ENCODE measurements at regions of chr21 and their contacts with region 1.

Region 1: GRCh38 chr21:42117229-42117966 is 46.3 kb downstream of the UMODL1 start:
- DNase-seq: peak in 1 of 2 donors; percentile 46
- ATAC-seq: peak; percentile 66 to 87
- H3K4me3 ChIP-seq: no peak overlapping the region
- H3K27ac ChIP-seq: no peak overlapping the region
- H3K4me1 ChIP-seq: peaks cover 0 to 3% of the 10 kb centered on the region in 2 donors
- H3K27me3 ChIP-seq: peaks cover 0 to 11% (median 7%) of the 10 kb centered on the region in 3 donors
- CTCF ChIP-seq: peak; percentile 80 to 91 (median 87)
- POLR2A ChIP-seq: no peak

Region 2: DNA sequence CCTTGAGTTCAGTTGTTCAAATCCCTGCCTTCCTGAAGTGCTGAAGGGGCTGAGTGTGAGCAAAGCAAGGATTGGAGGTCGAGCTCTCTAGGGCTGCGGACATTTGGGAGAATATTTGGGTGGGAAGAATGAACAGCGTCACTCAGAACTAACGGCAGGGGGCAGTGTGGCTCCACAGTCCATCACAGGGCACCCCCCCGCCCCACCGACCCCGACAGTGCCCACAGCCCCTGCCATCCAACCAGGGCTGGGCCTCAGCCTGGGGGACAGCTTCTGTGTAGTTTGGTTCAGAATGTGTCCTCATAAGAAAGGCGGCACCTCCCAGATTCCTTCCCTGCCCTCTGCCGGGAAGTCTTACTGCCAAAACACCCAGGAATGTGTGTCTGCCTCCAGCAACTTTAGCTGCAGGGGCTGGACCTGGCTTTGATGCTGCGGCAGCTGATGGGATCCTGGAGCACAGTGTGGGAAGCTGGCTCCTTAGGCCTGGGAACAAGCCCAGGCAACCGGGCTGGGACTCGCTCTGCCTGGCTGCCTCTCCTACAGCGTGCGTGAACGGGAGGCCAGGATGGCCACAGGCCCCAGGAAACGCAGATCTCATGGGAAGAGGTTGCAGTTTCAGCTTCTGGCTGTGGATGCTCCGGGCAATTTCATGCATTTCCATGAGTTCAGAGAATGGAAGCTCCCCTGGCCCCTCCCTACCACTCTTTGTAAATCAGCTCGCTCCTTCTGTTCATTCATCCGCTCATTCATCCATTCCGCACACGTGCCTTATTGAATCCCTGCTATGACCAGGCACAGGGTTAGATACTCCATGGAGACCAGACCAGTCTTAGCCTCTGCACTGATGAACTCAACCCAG is 504.5 kb before region 1 on chr21:
- in situ Hi-C with region 1: loop called in 1 of 4 experiments (anchors 25 kb)
- intact Hi-C with region 1: loop called (anchors 10 kb)
- DNase-seq: peak; percentile 47 to 72
- ATAC-seq: peak; percentile 75 to 77
- H3K4me3 ChIP-seq: no peak overlapping the region
- H3K27ac ChIP-seq: peak overlapping the region in 1 of 4 donors; percentile 11
- H3K4me1 ChIP-seq: peaks cover 5 to 12% of the 10 kb centered on the region in 2 donors
- H3K27me3 ChIP-seq: peaks cover 0 to 8% (median 5%) of the 10 kb centered on the region in 3 donors
- CTCF ChIP-seq: peak; percentile 33 to 68 (median 54)
- POLR2A ChIP-seq: no peak

Region 3: DNA sequence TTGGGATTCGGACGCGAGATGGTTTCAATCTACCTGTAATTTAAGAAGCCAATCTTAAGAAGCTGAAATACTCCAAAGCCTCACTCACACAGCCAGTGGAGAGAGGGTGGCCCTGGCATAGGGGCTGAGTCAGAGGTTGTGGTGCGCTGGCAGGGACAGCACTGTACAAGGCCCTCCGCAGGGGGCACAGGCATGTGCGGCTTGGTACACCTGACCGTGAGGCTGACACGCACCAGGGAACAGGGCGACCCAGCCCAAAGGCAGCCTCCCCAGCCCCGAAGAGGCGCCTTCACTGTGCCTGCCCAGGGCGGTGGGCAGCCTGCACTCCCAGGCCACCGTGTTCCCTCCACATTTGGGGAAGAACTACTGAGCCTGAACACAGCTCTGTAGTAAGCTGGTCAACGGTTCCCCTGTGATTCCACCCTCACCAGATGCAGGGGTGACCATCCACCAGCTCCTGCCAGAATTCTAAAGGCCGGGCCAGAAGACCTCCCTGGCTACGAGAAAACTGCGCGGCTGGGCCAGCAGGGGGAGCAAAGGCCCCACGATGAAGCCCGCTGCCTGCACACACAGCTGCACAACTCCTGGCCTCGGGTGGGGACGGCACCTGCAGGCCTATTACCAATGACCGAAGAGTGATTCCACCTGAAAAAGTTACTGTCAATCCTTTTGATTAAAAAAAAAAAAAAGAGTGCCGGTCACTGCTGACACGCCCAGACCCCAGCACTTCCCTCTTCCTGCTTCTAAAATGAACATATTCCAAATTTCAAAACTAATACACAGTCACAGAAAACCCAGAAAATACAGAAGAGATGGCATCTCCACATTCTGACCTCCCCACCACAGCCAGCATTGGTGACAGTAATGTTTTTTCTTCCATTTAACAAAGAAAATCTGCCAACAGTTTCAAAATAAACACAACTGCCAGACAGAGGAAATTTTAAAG is 300.9 kb before region 1 on chr21:
- in situ Hi-C with region 1: loop called (anchors 10 to 25 kb)
- intact Hi-C with region 1: loop called (anchors 1 kb)
- DNase-seq: peak; percentile 18 to 33
- ATAC-seq: peak; percentile 42 to 62
- H3K4me3 ChIP-seq: no peak overlapping the region
- H3K27ac ChIP-seq: no peak overlapping the region
- H3K4me1 ChIP-seq: no peaks in the 10 kb centered on the region
- H3K27me3 ChIP-seq: no peaks in the 10 kb centered on the region
- CTCF ChIP-seq: peak; percentile 65 to 76 (median 70)
- POLR2A ChIP-seq: no peak

Region 4: DNA sequence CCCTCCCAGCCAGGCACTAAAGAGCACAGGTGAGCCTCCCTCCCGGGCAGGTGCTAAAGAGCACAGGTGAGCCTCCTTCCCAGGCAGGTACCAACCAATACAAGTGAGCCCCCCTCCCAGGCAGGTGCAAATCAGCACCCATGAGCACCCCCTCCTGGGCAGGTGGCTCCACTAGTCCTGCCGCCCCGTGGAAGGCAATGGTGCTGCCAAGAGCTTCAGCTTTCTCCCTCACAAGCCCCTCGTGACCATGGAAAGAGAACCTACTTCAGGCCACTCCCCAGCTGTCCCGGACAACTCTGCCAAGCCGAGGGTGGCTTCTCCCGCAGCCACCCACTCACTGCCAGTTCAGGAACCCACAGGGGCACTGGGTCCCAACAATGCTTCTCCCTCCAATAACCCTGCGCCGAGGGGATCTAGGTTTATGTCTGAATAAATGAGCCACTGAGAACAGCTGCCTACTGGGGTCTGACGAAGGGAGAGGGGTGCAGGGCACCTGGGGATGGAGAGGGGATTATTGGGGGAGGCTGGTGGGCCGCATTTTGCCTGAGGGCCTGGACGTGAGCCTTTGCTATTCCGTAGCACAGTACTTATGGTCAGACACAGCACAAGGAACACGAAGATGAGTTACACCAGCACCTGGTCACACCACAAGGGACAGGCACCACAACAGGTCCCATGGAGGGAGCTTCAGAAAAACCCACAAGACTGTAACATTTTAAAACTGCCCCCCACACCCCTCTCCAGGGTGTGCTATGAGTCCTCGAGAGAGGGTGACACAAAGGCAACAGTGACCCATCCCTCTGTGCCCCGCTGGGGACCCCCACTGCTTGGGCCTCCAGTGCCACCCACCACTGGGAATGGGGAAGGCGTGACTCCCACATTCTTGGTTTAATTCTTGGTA is 284.6 kb before region 1 on chr21:
- in situ Hi-C with region 1: loop called in 1 of 4 experiments (anchors 10 kb)
- intact Hi-C with region 1: no loop called
- DNase-seq: no peak
- ATAC-seq: no peak
- H3K4me3 ChIP-seq: no peak overlapping the region
- H3K27ac ChIP-seq: no peak overlapping the region
- H3K4me1 ChIP-seq: no peaks in the 10 kb centered on the region
- H3K27me3 ChIP-seq: no peaks in the 10 kb centered on the region
- CTCF ChIP-seq: no peak
- POLR2A ChIP-seq: no peak

Region 5: DNA sequence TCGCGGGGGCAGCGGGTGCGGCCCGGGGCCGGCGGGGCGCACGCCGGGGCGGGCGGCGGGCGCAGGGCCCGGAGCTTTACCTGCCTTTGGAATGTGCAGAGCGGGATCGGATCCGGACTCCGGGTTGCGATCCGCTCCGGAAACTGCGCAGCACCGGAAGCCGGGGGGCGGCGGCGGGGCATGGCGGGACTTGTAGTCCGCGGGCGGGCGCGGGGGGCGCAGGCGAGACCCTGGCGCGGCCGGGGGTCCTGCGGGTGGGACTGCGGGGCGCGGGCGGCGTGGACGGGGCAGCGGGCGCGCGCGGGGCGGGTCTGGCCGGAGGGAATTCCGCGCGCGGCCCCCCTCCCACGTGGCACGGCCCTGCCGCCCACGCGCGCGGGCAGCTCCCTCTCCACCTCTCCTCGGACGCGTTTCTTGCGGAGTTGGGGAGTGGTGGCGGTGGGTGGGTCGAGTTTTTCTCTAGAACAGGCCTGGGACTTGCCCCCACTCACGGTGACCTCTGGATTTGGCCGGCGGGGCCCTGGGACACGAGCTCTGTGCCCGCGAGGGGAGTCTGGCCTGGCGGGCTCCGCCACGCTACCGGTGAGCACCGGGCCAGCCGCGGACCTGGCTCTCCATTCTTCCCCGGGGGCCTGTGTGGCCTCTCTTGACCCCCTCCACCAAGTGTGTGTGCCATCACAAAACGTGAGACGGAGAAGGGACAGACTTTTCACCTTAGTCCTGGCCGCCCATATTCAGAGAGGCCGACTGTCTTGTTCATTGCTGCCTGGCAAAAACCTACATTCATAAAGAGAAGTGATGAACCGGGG is 238.0 kb before region 1 on chr21 and contains the start of gene PRDM15:
- in situ Hi-C with region 1: no loop called
- intact Hi-C with region 1: loop called (anchors 5 kb)
- DNase-seq: peak; percentile 69 to 71
- ATAC-seq: peak; percentile 92 to 93
- H3K4me3 ChIP-seq: peak within 1 kb of the TSS; percentile 86 to 96 (median 90)
- H3K27ac ChIP-seq: peak within 1 kb of the TSS; percentile 86 to 89 (median 86)
- H3K4me1 ChIP-seq: peaks cover 6 to 9% of the 10 kb centered on the region in 2 donors
- H3K27me3 ChIP-seq: no peaks in the 10 kb centered on the region
- CTCF ChIP-seq: no peak
- POLR2A ChIP-seq: peak in 1 of 2 donors; percentile 20
- total RNA-seq, gene PRDM15: 4.4 to 13.6 (median 5.4) TPM

Region 6: GRCh38 chr21:41953831-41954653 is 163.4 kb before region 1 on chr21 and contains the start of gene C2CD2:
- in situ Hi-C with region 1: no loop called
- intact Hi-C with region 1: loop called (anchors 5 kb)
- DNase-seq: no peak
- ATAC-seq: peak; percentile 60 to 67
- H3K4me3 ChIP-seq: peak within 1 kb of the TSS; percentile 61 to 68 (median 62)
- H3K27ac ChIP-seq: peak within 1 kb of the TSS; percentile 53 to 71 (median 64)
- H3K4me1 ChIP-seq: peaks cover 33 to 38% of the 10 kb centered on the region in 2 donors
- H3K27me3 ChIP-seq: peaks cover 0 to 17% (median 0%) of the 10 kb centered on the region in 3 donors
- CTCF ChIP-seq: no peak
- POLR2A ChIP-seq: peak; percentile 56 to 60
- total RNA-seq, gene C2CD2: 1.7 to 7.2 (median 2.4) TPM

Region 7: DNA sequence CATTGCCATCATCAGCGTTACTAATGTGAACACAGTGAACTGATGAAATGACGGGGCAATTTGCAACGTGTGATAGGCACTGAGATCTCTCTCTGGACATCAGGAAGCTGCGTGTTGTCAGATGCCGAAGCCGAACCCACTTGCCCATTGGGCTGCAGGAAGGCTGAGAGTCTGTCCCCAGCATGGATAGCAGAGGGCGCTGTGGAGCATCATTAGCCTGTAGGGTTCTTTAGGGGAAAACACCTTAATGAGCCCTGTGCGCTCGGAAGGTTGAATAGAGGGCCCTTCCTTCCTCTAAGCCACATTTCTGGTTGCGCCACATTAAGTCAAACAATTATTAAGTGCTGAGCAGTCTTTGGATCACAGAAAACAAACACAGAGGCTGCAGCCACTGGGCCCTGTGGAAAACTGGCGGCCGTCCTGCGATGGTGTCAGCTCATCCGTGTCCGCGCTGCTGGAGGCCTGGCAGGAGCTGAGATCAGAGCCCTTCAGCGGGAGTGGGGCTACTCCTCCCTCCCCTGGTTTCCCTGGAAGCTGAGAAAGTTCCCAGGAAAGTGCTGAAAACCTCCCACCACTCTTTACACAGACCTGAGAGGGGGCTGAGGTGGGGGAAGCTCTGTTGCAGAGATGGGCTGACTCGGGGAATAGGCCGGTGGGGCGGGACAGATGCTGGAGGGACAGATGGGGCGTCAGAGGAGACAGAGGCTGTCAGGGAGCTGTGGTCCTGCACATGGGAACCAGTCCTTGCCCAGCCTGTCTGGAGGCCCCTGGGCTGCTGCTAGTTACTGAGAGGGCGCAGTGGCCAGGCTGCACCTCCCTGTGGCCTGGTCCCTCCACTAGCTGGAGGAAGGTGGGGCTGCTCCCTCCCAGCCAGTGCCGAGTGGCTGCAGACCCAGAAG is 220.7 kb after region 1 on chr21:
- in situ Hi-C with region 1: no loop called
- intact Hi-C with region 1: no loop called
- DNase-seq: peak; percentile 18 to 42
- ATAC-seq: peak; percentile 69 to 89
- H3K4me3 ChIP-seq: peak overlapping the region in 1 of 4 donors; percentile 30
- H3K27ac ChIP-seq: no peak overlapping the region
- H3K4me1 ChIP-seq: no peaks in the 10 kb centered on the region
- H3K27me3 ChIP-seq: peaks cover 7 to 18% (median 8%) of the 10 kb centered on the region in 3 donors
- CTCF ChIP-seq: peak in 3 of 5 experiments; percentile 45 to 62 (median 50)
- POLR2A ChIP-seq: no peak